Panc1 (cell line): ENCODE measurements at regions of chr13 and their contacts with region 1.

Region 1: DNA sequence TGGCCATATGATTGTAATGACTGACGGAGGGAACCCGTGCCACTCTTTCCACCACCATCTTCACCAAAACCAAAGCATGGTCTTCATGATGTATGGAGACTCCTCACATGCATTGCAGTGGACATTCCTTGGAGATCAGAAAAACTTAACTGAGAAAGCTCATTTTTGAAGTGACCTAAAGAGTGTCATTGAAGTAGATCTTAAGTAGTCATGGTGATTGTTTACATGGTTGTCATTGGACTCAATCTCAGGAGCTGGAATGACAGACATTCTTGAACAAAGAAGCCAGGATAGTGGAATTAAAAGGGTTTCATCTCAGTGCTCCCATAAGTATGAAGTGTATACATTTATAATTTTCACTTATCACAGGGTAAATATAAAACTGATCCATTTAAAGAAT is 236.7 kb upstream of the IPO5 start:
- DNase-seq: no peak
- ATAC-seq: no peak
- H3K4me3 ChIP-seq: no peak overlapping the region
- H3K27ac ChIP-seq: no peak overlapping the region
- H3K4me1 ChIP-seq: no peaks in the 10 kb centered on the region
- H3K27me3 ChIP-seq: no peaks in the 10 kb centered on the region
- CTCF ChIP-seq: no peak

Region 2: DNA sequence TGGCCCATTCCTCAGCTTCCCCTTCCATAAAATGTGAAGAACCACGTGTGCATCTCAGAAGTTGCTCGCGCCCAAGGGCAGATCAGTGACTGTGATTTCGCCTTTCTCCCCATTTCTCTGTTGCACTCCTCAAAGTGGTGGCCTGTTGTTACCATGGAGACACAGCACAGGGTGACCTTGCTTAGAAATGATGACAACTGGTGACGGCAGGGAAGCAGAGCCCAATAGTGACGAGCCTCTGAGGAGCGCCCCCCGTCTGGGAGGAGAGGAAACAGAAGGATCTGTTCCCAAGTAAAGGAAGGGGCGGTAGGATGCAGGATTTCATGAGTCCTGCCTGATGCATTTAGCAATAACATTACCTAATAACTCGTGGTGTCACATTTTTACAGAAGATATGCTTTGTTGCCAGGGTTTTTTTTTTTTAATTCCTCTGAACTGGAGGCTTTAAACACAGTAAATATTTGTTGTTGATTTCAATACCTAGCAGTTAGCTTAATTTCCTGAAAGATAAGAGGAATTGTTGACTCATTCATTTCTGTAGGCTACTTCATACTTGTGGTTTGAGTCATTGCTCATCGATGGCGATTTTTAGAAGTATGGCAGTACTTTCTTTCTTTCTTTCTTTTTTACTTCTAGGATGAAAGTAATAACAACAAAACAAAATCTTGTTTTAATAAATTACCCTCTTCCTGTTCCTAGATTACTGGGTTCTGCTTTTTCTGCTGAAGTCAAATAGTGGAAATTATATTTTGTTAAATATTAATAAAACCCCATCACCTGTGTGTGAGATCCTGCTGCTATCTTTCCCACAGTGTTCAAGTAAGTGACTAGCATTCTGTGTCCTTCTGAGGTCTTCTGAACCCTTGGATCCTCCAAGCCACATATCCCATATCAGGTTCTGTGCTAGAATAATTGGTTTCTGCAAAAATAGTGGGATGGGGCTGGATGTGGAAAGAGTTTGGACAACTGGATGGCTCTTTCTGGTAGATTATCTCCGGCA is 458.6 kb before region 1 on chr13:
- CTCF ChIA-PET with region 1: no interaction called
- POLR2A ChIA-PET with region 1: no interaction called
- in situ Hi-C with region 1: no loop called
- intact Hi-C with region 1: no loop called
- DNase-seq: no peak
- ATAC-seq: peak; percentile 56
- H3K4me3 ChIP-seq: no peak overlapping the region
- H3K27ac ChIP-seq: peak overlapping the region; percentile 100
- H3K4me1 ChIP-seq: peaks cover 99% of the 10 kb centered on the region
- H3K27me3 ChIP-seq: no peaks in the 10 kb centered on the region
- CTCF ChIP-seq: peak; percentile 40

Region 3: DNA sequence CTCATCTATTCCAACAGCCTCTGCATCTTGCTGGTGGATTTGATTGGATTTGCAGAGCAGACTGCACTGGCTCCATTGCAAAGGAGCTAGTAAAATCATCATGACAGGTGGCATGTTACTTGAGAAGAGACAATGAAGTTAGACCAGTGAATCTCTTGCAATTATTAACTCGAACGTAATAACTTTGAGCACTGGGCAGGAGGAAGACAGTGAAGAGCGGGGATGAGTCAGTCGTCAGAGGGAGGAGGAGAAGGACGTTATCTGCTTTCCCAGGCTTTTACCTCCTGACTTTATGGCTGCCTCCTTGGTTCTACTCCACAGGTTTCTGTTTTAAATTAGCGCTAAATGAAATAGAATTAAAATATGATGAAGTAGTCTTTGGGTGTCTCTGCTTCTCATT is 21.1 kb before region 1 on chr13:
- CTCF ChIA-PET with region 1: interaction called, 12 read pairs
- POLR2A ChIA-PET with region 1: no interaction called
- in situ Hi-C with region 1: no loop called
- intact Hi-C with region 1: no loop called
- DNase-seq: no peak
- ATAC-seq: no peak
- H3K4me3 ChIP-seq: no peak overlapping the region
- H3K27ac ChIP-seq: no peak overlapping the region
- H3K4me1 ChIP-seq: no peaks in the 10 kb centered on the region
- H3K27me3 ChIP-seq: no peaks in the 10 kb centered on the region; the same call in 1 of the 2 replicates
- CTCF ChIP-seq: no peak